ENCODE measurements at regions of chr6 and their contacts with region 1.

Region 1: DNA sequence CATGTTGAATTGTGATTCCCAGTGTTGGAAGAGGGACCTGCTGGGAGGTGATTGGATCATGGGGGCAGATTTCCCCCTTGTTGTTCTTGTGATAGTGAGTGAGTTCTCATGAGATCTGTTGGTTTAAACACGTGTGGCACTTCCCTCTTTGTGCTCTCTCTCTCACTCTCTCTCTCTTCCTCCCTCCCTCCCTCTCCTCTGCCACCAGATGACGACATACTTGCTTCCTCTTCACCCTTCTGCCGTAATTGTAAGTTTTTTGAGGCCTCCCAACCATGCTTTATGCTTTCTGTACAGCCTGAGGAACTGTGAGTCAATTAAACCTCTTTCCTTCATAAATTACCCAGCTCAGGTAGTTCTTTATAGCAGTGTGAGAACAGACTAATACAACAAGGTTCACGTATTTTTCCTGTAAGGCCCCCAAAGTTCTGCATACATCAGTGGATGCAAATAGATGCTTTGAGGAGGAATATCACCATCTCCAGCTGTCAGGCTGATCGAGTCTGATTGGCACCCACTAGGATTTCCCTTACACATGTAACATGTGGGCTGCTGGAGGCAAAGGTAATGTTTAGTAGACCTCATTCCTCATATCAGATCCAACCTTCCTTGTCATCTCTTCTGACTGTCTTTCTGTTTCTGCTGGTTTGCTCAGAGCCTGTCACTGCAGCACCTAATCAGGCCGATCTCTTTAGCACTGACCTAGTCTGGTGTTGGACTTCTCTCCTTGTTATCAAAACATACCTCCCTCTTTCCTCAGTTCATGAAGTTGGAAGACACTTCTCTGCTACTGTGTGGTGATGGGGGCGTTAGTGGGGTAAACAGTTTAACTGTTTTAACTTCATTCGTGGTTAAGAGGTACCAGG is 54.3 kb upstream of the BACH2 start:
- DNase-seq: peak; percentile 38
- H3K4me3 Mint-ChIP-seq: peak overlapping the region; percentile 39
- H3K27ac Mint-ChIP-seq: peak overlapping the region; percentile 78
- H3K4me1 Mint-ChIP-seq: peaks cover 46% of the 10 kb centered on the region
- H3K27me3 Mint-ChIP-seq: peaks cover 10% of the 10 kb centered on the region

Region 2: DNA sequence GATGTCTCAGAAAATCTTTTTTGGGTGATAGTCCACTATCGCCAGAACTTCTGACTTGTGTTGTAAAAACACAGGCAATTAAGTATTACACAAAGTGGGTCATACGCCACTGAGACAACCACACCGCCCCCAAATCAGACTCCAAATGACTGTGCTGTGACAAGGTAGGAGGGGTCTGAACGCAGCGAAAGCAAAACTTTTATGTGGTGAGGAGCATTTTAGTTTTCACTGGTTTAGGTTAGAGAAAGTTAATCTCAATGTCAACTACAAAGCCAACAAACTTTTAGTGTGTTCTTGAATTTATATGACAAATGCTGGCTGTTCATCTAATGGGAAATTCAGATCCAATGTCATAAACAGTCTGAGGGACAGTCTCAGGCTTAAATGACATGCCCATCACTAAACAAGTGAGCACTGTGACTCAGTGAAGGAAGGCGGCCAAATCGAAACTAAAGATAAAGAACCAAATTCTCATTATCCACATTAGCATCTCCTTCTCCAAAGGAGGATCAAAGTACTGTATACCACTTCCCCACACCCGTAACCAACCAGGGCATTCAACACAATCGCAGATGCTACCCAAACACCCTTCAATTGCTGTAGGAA is 269.9 kb before region 1 on chr6:
- intact Hi-C with region 1: no loop called
- DNase-seq: peak; percentile 76
- H3K4me3 Mint-ChIP-seq: peak overlapping the region; percentile 88
- H3K27ac Mint-ChIP-seq: peak overlapping the region; percentile 95
- H3K4me1 Mint-ChIP-seq: peaks cover 96% of the 10 kb centered on the region
- H3K27me3 Mint-ChIP-seq: no peaks in the 10 kb centered on the region

Region 3: DNA sequence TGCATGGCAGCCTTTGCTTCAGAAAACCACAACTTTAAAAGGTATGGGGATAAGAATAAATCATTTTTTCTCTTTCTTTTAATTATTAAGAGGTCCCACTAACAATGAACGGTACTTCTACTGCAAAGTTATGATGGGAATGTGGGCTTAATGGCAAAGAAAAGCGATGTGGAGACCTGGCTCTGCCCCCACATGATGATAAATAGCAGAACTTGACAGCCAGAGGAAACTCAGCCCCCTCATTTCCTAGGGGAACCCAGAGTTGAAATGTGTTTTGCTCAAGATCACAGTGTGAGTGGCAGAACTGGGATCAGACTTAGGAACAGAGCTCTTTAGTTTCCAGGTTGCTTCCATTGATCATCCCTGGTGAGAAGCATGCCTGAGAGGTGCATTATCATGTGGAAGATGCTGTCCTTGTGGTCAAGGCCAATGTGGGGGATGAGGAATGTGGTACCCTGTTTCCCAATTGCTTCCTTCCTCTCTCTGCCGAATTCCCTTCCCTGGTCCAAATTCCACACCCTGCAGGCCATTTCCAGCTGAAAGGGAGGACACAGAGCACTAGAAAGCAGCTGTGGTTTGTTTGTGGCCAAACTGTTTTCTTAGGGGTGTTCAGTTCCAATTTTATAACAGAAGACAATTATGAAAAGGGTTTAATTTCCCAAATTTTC is 120.2 kb before region 1 on chr6:
- intact Hi-C with region 1: loop called (anchors 5 kb)
- DNase-seq: no peak
- H3K4me3 Mint-ChIP-seq: peak overlapping the region; percentile 10
- H3K27ac Mint-ChIP-seq: peak overlapping the region; percentile 31
- H3K4me1 Mint-ChIP-seq: peaks cover 89% of the 10 kb centered on the region
- H3K27me3 Mint-ChIP-seq: no peaks in the 10 kb centered on the region

Region 4: GRCh38 chr6:90304308-90304707 is 46.6 kb before region 1 on chr6:
- intact Hi-C with region 1: loop called (anchors 1 kb)
- DNase-seq: no peak
- H3K4me3 Mint-ChIP-seq: no peak overlapping the region
- H3K27ac Mint-ChIP-seq: no peak overlapping the region
- H3K4me1 Mint-ChIP-seq: peaks cover 20% of the 10 kb centered on the region
- H3K27me3 Mint-ChIP-seq: peaks cover 51% of the 10 kb centered on the region

Region 5: GRCh38 chr6:90319044-90319443 is 31.9 kb before region 1 on chr6:
- intact Hi-C with region 1: loop called (anchors 1 kb)
- DNase-seq: no peak
- H3K4me3 Mint-ChIP-seq: no peak overlapping the region
- H3K27ac Mint-ChIP-seq: peak overlapping the region; percentile 63
- H3K4me1 Mint-ChIP-seq: peaks cover 19% of the 10 kb centered on the region
- H3K27me3 Mint-ChIP-seq: peaks cover 4% of the 10 kb centered on the region

Region 6: DNA sequence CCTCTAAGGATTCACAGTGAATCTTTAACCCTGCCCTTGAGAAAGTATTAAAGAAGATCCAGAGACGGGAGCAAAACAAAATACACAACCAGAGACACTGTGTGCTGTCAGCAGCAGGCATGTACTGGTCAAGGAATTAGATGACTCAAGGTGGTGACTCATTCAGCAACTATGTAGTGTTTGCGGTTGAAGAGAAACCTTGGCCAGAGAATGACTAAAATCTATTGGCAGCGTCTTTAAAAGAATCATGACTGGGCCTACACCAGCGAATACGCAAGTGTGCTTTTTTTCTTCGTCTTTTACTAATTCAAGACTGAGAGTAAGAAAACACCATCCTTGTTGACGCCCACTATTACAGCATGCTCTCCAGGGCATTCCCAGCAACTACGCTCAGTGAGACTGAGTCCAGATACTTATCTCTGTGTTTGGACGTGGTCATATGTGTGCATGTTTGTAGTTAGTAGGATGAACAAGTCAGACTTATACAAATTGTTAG is 18.1 kb after region 1 on chr6:
- intact Hi-C with region 1: loop called (anchors 1 kb)
- DNase-seq: no peak
- H3K4me3 Mint-ChIP-seq: no peak overlapping the region
- H3K27ac Mint-ChIP-seq: peak overlapping the region; percentile 46
- H3K4me1 Mint-ChIP-seq: peaks cover 22% of the 10 kb centered on the region
- H3K27me3 Mint-ChIP-seq: peaks cover 4% of the 10 kb centered on the region

Region 7: DNA sequence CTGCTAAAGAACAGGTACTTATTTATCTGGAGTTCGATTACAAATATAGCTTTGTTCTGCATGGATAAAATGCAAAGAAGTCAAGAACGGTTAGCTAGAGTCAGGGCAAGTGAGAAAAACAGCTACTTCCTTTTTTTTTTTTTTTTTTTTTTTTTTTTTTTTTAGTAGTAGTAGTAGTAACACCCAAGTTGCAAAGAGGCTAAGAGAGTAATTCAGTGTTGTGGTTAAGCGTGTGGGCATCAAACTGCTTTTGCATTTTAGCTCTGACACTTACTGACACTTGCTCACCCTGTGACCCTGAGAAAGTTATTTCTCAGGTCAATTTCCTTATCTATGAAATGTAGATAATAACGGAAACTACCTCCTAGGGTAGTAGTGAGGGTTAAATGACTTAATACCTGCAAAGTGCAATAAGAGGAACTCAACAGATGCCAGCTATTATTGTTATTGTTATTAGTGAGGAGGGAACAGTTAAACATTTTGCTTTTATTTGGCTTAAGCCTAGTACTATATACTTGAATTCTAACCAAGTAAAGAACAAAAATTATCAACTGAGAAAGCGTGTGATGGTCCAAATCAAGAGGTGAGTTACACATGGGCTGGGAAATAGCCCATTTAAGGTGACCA is 32.4 kb after region 1 on chr6:
- intact Hi-C with region 1: loop called (anchors 2 kb)
- DNase-seq: no peak
- H3K4me3 Mint-ChIP-seq: no peak overlapping the region
- H3K27ac Mint-ChIP-seq: peak overlapping the region; percentile 1
- H3K4me1 Mint-ChIP-seq: peaks cover 38% of the 10 kb centered on the region
- H3K27me3 Mint-ChIP-seq: peaks cover 11% of the 10 kb centered on the region

Measured in activated T-helper 1 cell treated with anti-CD3 and anti-CD28 coated beads, Interleukin-12 subunit alpha, Interleukin-12 subunit beta, Interleukin-2, Interleukin-4 antibody, amounts not matched to agents 30 ng/mL and 10 ng/mL and 1 ng/mL, durations not matched to agents 14 hours and 24 hours and 36 hours (primary cell).